ENCODE measurements at regions of chr2 and their contacts with region 1.

Region 1: GRCh38 chr2:20097879-20098714 is 46.7 kb upstream of the LAPTM4A start:
- DNase-seq: peak; percentile 82
- ATAC-seq: peak; percentile 63
- H3K4me3 ChIP-seq: peak overlapping the region in 1 of 3 experiments; percentile 38; a peak in 2 of 6 replicates
- H3K27ac ChIP-seq: no peak overlapping the region
- H3K4me1 ChIP-seq: peaks cover 58% of the 10 kb centered on the region
- H3K27me3 ChIP-seq: no peaks in the 10 kb centered on the region
- CTCF ChIP-seq: peak; percentile 98
- EP300 ChIP-seq: no peak
- POLR2A ChIP-seq: no peak
- RAD21 ChIP-seq: peak; percentile 98

Region 2: GRCh38 chr2:19955544-19956422 is 142.3 kb before region 1 on chr2:
- CTCF ChIA-PET with region 1: interaction called, 93 read pairs
- POLR2A ChIA-PET with region 1: interaction called, 6 read pairs
- in situ Hi-C with region 1: loop called (anchors 5 kb)
- intact Hi-C with region 1: loop called (anchors 1 kb)
- DNase-seq: peak; percentile 79
- ATAC-seq: peak; percentile 99
- H3K4me3 ChIP-seq: no peak overlapping the region
- H3K27ac ChIP-seq: no peak overlapping the region
- H3K4me1 ChIP-seq: no peaks in the 10 kb centered on the region
- H3K27me3 ChIP-seq: no peaks in the 10 kb centered on the region
- CTCF ChIP-seq: peak; percentile 92
- EP300 ChIP-seq: no peak
- POLR2A ChIP-seq: no peak
- RAD21 ChIP-seq: peak; percentile 92

Region 3: DNA sequence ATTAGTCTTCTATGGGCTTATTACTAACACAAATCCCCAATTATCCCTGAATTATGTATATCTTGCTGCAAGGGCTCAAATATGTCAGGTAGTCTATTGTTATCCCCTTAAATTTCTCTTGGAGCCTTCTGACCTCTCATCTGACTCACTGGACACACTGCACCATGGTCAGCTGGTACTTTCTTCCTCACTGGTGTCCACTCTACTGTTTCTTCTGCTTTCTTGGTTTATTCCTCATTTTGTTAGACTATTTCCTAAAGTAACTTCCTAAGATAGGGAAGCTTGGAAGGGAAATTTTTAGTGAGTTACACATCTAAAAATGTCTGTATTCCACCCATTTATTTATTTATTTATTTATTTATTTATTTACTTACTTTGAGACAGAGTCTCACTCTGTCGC is 134.7 kb before region 1 on chr2:
- CTCF ChIA-PET with region 1: interaction called, 4 read pairs
- POLR2A ChIA-PET with region 1: no interaction called
- in situ Hi-C with region 1: loop called (anchors 5 kb)
- intact Hi-C with region 1: no loop called
- DNase-seq: no peak
- ATAC-seq: no peak
- H3K4me3 ChIP-seq: no peak overlapping the region
- H3K27ac ChIP-seq: no peak overlapping the region
- H3K4me1 ChIP-seq: no peaks in the 10 kb centered on the region
- H3K27me3 ChIP-seq: no peaks in the 10 kb centered on the region
- CTCF ChIP-seq: no peak
- EP300 ChIP-seq: no peak
- POLR2A ChIP-seq: no peak
- RAD21 ChIP-seq: no peak

Region 4: DNA sequence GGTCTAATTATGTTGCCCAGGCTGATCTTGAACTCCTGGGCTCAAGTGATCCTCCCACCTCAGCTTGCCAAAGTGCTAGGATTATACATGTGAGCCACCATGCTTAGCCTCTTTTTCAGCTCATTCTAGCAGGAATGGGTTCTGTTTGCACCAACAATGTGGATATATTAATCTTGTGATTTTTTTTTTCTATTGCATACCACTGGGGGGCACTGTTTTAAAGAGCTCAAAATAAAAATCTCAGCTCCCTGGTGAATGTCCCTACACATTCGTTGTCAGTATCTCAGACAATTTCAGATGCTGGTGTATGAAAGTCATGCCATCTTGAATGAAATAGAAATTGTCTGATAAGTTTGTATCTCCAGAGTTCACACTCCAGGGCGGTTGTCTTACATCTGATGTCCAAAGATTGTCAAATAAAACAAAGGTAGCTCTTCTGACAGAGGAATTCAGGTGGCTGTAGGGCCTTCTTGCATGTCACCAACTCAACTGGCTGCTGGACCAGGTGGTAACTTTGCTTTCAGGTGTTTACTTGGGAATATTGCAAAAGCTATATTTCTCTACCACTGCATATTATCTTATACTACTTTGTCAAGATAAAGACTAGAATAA is 82.5 kb before region 1 on chr2:
- CTCF ChIA-PET with region 1: interaction called, 46 read pairs
- POLR2A ChIA-PET with region 1: interaction called, 18 read pairs
- in situ Hi-C with region 1: loop called (anchors 5 kb)
- intact Hi-C with region 1: loop called (anchors 1 kb)
- DNase-seq: peak; percentile 75
- ATAC-seq: no peak
- H3K4me3 ChIP-seq: no peak overlapping the region
- H3K27ac ChIP-seq: no peak overlapping the region
- H3K4me1 ChIP-seq: peaks cover 57% of the 10 kb centered on the region
- H3K27me3 ChIP-seq: no peaks in the 10 kb centered on the region; a peak in 1 of 5 replicates
- CTCF ChIP-seq: peak; percentile 73
- EP300 ChIP-seq: no peak
- POLR2A ChIP-seq: no peak
- RAD21 ChIP-seq: peak; percentile 70

Region 5: DNA sequence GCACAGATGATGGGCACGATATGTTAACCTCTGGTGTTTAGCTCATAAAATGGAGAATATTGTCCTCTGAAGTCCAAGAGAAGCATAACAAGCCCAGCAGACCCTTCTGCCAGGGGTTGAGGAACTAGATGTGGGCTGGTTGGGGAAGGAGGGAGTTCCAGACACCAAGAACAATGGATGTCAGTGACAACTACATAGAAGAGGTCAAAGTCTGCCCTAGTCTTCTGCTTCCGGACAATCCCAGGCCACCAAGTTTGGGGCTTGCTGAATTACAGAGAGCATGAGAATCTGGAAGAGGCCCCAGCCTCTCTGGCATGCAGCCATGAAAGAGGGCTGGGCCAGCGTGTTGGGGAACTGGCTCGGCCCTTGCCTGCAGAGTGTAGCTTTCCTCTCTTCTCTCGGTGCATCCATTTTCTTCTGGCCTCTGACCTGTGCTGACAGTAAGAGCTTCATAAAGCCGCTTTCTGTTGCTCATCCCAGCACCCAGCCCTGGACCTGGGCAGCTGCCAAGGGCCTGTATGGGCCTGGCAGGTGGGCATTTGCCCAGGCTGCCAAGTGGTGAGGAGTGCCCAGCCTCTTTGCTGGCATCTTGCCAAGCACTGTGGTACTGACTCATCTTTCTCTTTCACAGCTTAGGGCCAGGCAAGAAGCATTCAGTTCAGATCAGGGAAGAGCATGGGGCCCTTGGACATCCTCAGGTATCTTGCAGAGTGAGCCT is 32.1 kb before region 1 on chr2:
- CTCF ChIA-PET with region 1: no interaction called
- POLR2A ChIA-PET with region 1: interaction called, 3 read pairs
- in situ Hi-C with region 1: no loop called
- intact Hi-C with region 1: loop called (anchors 1 kb)
- DNase-seq: peak; percentile 95
- ATAC-seq: peak; percentile 92
- H3K4me3 ChIP-seq: peak overlapping the region in 2 of 3 experiments; percentile 25 to 70; a peak in 5 of 6 replicates
- H3K27ac ChIP-seq: peak overlapping the region; percentile 1
- H3K4me1 ChIP-seq: peaks cover 67% of the 10 kb centered on the region
- H3K27me3 ChIP-seq: no peaks in the 10 kb centered on the region
- CTCF ChIP-seq: no peak
- EP300 ChIP-seq: peak in 1 of 2 experiments; percentile 67; a peak in 2 of 4 replicates
- POLR2A ChIP-seq: no peak
- RAD21 ChIP-seq: no peak

Region 6: GRCh38 chr2:20071397-20072383 is 26.4 kb before region 1 on chr2:
- CTCF ChIA-PET with region 1: interaction called, 3 read pairs
- POLR2A ChIA-PET with region 1: interaction called, 3 read pairs
- in situ Hi-C with region 1: no loop called
- intact Hi-C with region 1: loop called (anchors 1 kb)
- DNase-seq: peak; percentile 71
- ATAC-seq: peak; percentile 85
- H3K4me3 ChIP-seq: peak overlapping the region; percentile 50 to 60 (median 51)
- H3K27ac ChIP-seq: peak overlapping the region; percentile 34
- H3K4me1 ChIP-seq: peaks cover 67% of the 10 kb centered on the region
- H3K27me3 ChIP-seq: no peaks in the 10 kb centered on the region; a peak in 1 of 5 replicates
- CTCF ChIP-seq: no peak
- EP300 ChIP-seq: peak in 1 of 2 experiments; percentile 46; a peak in 1 of 4 replicates
- POLR2A ChIP-seq: no peak
- RAD21 ChIP-seq: no peak

Region 7: DNA sequence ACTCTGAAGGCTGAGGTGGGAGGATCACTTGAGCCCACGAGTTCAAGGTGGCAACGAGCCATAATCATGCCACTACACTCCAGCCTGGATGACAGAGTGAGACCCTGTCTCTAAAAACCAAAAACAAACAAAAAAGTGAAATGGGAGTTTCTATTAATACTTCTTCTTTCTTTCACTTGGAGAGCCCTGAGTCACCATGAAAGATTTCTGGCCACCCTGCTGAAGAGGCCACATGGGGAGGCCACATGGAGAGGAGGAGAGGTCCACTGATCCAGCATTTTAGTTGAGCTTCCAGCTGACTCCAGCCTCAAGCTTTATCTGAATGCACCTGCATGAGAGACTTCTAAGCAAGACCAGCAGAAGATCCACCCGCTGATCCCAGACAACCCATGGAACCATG is 27.5 kb after region 1 on chr2:
- CTCF ChIA-PET with region 1: no interaction called
- POLR2A ChIA-PET with region 1: no interaction called
- in situ Hi-C with region 1: no loop called
- intact Hi-C with region 1: no loop called
- DNase-seq: no peak
- ATAC-seq: no peak
- H3K4me3 ChIP-seq: no peak overlapping the region
- H3K27ac ChIP-seq: no peak overlapping the region
- H3K4me1 ChIP-seq: peaks cover 34% of the 10 kb centered on the region
- H3K27me3 ChIP-seq: peaks cover 1 to 29% of the 10 kb centered on the region in 2 experiments; a peak in 2 of 5 replicates
- CTCF ChIP-seq: no peak
- EP300 ChIP-seq: no peak
- POLR2A ChIP-seq: no peak
- RAD21 ChIP-seq: no peak